CD8-positive, alpha-beta T cell (primary cell): ENCODE measurements at regions of chr17 and their contacts with region 1.

Region 1: DNA sequence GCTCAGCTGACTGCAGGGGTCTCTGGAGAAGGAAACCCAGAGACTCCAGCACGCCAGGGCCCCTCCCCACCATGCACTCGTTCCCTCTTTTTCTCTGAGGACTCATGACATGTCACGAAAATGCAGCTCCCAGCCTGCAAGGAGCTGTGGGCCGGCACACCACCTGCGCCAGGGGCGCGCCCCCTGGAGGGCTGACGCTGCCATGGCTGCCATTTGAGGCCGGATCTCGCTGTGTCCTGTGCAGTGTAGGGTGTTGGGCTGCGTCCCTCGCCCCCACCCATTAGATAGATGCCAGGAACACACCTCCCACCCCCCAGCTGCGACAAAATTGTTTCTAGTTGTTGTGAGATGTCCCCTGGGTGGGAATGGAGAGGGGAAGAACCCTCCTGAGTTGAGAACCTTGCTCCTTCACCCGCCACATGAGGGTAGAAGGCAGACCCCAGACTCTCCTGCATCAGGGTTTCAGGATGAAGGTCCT is 8.2 kb downstream of the SYNGR2 start:
- DNase-seq: peak; percentile 65 to 89 (median 77)
- ATAC-seq: peak; percentile 90
- H3K4me3 ChIP-seq: no peak overlapping the region
- H3K4me3 Mint-ChIP-seq: no peak overlapping the region
- H3K27ac ChIP-seq: no peak overlapping the region
- H3K27ac Mint-ChIP-seq: no peak overlapping the region
- H3K4me1 ChIP-seq: peaks cover 39% of the 10 kb centered on the region
- H3K4me1 Mint-ChIP-seq: peaks cover 41% of the 10 kb centered on the region
- H3K27me3 ChIP-seq: no peaks in the 10 kb centered on the region
- H3K27me3 Mint-ChIP-seq: no peaks in the 10 kb centered on the region
- CTCF ChIP-seq: peak; percentile 88

Region 2: GRCh38 chr17:77957857-77958715 is 218.5 kb before region 1 on chr17 and contains the start of gene TNRC6C:
- CTCF ChIA-PET with region 1: no interaction called
- POLR2A ChIA-PET with region 1: no interaction called
- intact Hi-C with region 1: no loop called
- DNase-seq: peak; percentile 99 to 100 (median 100)
- ATAC-seq: peak; percentile 86
- H3K4me3 ChIP-seq: peak within 1 kb of the TSS; percentile 74 to 81
- H3K4me3 Mint-ChIP-seq: peak within 1 kb of the TSS; percentile 97
- H3K27ac ChIP-seq: peak within 1 kb of the TSS; percentile 57 to 79
- H3K27ac Mint-ChIP-seq: peak within 1 kb of the TSS; percentile 97
- H3K4me1 ChIP-seq: peaks cover 37% of the 10 kb centered on the region
- H3K4me1 Mint-ChIP-seq: peaks cover 38% of the 10 kb centered on the region
- H3K27me3 ChIP-seq: no peaks in the 10 kb centered on the region
- H3K27me3 Mint-ChIP-seq: no peaks in the 10 kb centered on the region
- CTCF ChIP-seq: no peak
- total RNA-seq, gene TNRC6C: 49.3 to 53.8 TPM

Region 3: DNA sequence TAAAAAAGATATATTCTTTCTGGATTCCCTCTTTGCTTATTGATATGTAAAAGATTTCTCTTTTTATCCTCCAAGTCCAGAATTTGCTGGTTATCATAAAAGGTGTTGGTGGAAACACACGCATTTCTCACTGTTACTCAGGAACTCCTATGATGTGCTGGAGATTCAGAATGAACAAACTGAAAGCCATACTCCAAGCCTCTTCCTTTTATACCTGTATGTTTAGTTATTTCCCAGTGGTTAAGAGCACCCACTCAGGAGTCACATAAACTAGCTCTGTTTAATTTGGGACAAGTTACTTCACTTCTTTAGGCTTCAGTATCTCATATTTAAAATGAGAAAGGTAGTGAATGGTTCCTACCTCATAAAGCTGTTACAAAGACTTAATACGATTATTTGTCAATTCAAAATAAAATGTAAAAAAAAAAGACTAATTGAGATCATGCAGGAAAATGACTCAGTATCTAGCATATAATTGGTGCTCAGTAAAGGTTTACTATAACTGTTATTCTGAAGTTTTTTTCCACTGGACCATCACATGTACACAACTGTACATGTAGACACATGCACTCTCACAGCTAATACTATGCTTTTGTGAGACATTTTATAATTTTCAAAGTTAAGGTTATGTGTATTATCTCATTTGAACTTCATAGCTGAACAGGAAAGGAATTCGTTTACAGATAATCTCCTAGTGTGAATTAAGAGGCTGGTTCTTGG is 171.0 kb before region 1 on chr17:
- CTCF ChIA-PET with region 1: no interaction called
- POLR2A ChIA-PET with region 1: no interaction called
- intact Hi-C with region 1: no loop called
- DNase-seq: no peak
- ATAC-seq: no peak
- H3K4me3 ChIP-seq: no peak overlapping the region
- H3K4me3 Mint-ChIP-seq: no peak overlapping the region
- H3K27ac ChIP-seq: no peak overlapping the region
- H3K27ac Mint-ChIP-seq: peak overlapping the region; percentile 66
- H3K4me1 ChIP-seq: peaks cover 24% of the 10 kb centered on the region
- H3K4me1 Mint-ChIP-seq: peaks cover 34% of the 10 kb centered on the region
- H3K27me3 ChIP-seq: no peaks in the 10 kb centered on the region
- H3K27me3 Mint-ChIP-seq: no peaks in the 10 kb centered on the region
- CTCF ChIP-seq: no peak

Region 4: GRCh38 chr17:78082988-78083387 is 93.6 kb before region 1 on chr17:
- CTCF ChIA-PET with region 1: interaction called, 18 read pairs
- POLR2A ChIA-PET with region 1: no interaction called
- intact Hi-C with region 1: loop called (anchors 1 kb)
- DNase-seq: no peak
- ATAC-seq: no peak
- H3K4me3 ChIP-seq: no peak overlapping the region
- H3K4me3 Mint-ChIP-seq: no peak overlapping the region
- H3K27ac ChIP-seq: no peak overlapping the region
- H3K27ac Mint-ChIP-seq: peak overlapping the region; percentile 18
- H3K4me1 ChIP-seq: no peaks in the 10 kb centered on the region
- H3K4me1 Mint-ChIP-seq: peaks cover 3% of the 10 kb centered on the region
- H3K27me3 ChIP-seq: no peaks in the 10 kb centered on the region
- H3K27me3 Mint-ChIP-seq: no peaks in the 10 kb centered on the region
- CTCF ChIP-seq: no peak

Region 5: DNA sequence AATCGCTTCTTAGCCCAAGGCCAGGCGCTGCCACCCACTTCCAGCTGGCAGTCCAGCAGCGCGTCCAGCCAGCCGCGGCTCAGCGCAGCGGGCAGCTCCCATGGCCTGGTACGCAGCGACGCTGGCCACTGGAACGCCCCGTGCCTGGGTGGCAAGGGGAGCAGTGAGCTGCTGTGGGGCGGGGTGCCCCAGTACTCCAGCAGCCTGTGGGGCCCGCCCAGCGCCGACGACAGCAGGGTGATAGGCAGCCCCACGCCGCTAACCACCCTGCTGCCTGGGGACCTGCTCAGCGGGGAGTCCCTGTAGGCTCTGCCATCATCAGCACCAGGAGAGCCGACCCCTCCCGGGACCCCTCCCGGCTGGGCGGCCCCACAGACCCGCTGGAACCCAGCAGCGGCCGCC is 72.0 kb before region 1 on chr17:
- CTCF ChIA-PET with region 1: interaction called, 85 read pairs
- POLR2A ChIA-PET with region 1: interaction called, 5 read pairs
- intact Hi-C with region 1: no loop called
- DNase-seq: no peak
- ATAC-seq: no peak
- H3K4me3 ChIP-seq: no peak overlapping the region
- H3K4me3 Mint-ChIP-seq: no peak overlapping the region
- H3K27ac ChIP-seq: no peak overlapping the region
- H3K27ac Mint-ChIP-seq: no peak overlapping the region
- H3K4me1 ChIP-seq: no peaks in the 10 kb centered on the region
- H3K4me1 Mint-ChIP-seq: peaks cover 10% of the 10 kb centered on the region
- H3K27me3 ChIP-seq: no peaks in the 10 kb centered on the region
- H3K27me3 Mint-ChIP-seq: no peaks in the 10 kb centered on the region
- CTCF ChIP-seq: no peak

Region 6: DNA sequence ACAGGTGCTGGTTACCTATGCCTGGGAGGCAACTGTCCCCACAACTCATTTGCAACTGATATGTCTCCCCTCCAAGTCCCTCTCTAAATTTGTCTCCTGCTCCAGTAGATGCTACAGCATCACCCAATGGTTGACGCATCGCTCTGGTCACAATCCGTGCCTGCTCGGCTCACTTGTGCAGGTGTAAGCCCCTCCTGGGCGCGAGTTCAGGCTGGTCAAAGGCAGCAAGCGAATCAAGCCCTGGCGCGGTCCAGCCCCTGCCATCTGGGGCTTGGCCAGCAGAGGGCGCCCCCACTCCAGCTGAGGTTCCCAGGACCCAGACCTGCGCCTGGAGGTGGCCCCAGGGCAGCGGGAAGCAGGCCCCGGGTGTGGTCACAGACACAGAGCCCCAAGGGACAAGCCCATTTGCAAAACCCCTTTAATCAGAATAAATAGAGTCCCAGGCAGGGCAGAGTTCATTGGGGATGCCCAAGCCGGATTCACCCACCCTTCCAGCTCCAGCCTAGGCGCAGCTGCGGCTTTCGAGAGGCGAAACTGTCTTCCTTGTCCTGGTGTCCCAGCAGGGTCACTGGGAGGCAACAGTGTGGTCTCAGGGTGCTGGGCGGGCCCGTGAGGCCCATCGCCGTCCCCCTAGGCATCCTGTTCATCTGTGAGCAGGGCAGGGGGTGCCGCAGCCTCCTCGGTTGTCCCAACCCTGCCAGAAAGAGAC is 63.9 kb before region 1 on chr17:
- CTCF ChIA-PET with region 1: interaction called, 85 read pairs
- POLR2A ChIA-PET with region 1: interaction called, 5 read pairs
- intact Hi-C with region 1: loop called (anchors 1 kb)
- DNase-seq: peak; percentile 62 to 91 (median 78)
- ATAC-seq: peak; percentile 67
- H3K4me3 ChIP-seq: no peak overlapping the region
- H3K4me3 Mint-ChIP-seq: peak overlapping the region; percentile 42
- H3K27ac ChIP-seq: peak overlapping the region in 1 of 2 experiments; percentile 74
- H3K27ac Mint-ChIP-seq: peak overlapping the region; percentile 90
- H3K4me1 ChIP-seq: peaks cover 45% of the 10 kb centered on the region
- H3K4me1 Mint-ChIP-seq: peaks cover 42% of the 10 kb centered on the region
- H3K27me3 ChIP-seq: no peaks in the 10 kb centered on the region
- H3K27me3 Mint-ChIP-seq: no peaks in the 10 kb centered on the region
- CTCF ChIP-seq: peak; percentile 99

Region 7: GRCh38 chr17:78120971-78121800 is 55.4 kb before region 1 on chr17:
- CTCF ChIA-PET with region 1: interaction called, 12 read pairs
- POLR2A ChIA-PET with region 1: interaction called, 5 read pairs
- intact Hi-C with region 1: no loop called
- DNase-seq: peak in 6 of 9 experiments; percentile 61 to 84 (median 75)
- ATAC-seq: peak; percentile 51
- H3K4me3 ChIP-seq: peak overlapping the region; percentile 36 to 51
- H3K4me3 Mint-ChIP-seq: peak overlapping the region; percentile 83
- H3K27ac ChIP-seq: peak overlapping the region; percentile 47 to 75
- H3K27ac Mint-ChIP-seq: peak overlapping the region; percentile 93
- H3K4me1 ChIP-seq: peaks cover 91% of the 10 kb centered on the region
- H3K4me1 Mint-ChIP-seq: peaks cover 70% of the 10 kb centered on the region
- H3K27me3 ChIP-seq: no peaks in the 10 kb centered on the region
- H3K27me3 Mint-ChIP-seq: no peaks in the 10 kb centered on the region
- CTCF ChIP-seq: no peak

Region 8: DNA sequence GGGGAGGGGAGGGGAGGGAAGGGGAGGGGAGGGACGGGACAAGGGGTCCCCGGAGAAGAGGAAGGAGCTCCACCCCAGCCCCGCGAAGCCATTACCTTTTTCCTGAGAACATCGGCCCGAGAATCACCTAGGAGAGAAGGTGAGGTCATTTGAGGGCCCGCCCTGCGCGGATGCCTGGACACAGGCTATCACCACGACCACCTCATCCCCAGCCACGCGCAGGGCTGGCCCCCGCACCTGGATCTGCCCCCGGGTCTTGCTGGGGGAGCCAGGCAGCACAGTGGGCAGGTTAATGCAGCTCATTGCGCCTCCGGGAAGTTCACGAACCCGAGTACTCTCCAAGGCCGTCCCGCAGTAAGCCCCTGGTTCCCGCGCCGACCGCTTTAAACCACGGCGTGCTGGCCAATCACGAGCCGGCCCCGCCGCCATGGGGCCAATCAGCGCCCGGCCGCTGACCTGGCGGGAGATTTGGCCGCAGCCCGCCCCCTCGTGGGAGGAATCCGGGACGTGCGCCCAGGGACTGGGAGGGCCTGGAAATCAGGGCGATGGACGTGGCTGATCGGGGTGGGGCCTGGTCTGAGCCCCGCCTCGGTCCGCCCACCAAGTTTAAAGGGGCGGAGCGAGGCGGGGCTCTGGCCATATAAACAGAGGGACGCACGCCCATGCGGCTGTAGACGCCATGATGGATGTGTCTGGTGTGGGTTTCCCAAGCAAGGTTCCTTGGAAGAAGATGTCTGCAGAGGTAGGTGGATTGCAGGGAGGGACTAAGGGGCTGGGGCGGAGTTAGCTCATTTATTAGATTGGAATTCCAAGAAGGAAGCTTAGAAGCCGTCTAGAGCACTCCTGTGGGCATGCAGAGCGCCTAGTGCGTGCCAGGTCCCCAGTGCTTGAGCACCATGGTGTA is 10.4 kb after region 1 on chr17 and contains the starts of genes AFMID and TK1:
- CTCF ChIA-PET with region 1: interaction called, 24 read pairs
- POLR2A ChIA-PET with region 1: no interaction called
- intact Hi-C with region 1: no loop called
- DNase-seq: peak; percentile 57 to 85 (median 72)
- ATAC-seq: peak; percentile 91
- H3K4me3 ChIP-seq: peak within 1 kb of the TSS; percentile 48 to 73
- H3K4me3 Mint-ChIP-seq: peak within 1 kb of the TSS; percentile 85
- H3K27ac ChIP-seq: no peak within 1 kb of the TSS
- H3K27ac Mint-ChIP-seq: no peak within 1 kb of the TSS
- H3K4me1 ChIP-seq: peaks cover 6% of the 10 kb centered on the region
- H3K4me1 Mint-ChIP-seq: peaks cover 9% of the 10 kb centered on the region
- H3K27me3 ChIP-seq: no peaks in the 10 kb centered on the region
- H3K27me3 Mint-ChIP-seq: no peaks in the 10 kb centered on the region
- CTCF ChIP-seq: no peak
- total RNA-seq, gene AFMID: 0.65 to 0.92 TPM
- total RNA-seq, gene TK1: 0.76 to 1.1 TPM

Region 9: DNA sequence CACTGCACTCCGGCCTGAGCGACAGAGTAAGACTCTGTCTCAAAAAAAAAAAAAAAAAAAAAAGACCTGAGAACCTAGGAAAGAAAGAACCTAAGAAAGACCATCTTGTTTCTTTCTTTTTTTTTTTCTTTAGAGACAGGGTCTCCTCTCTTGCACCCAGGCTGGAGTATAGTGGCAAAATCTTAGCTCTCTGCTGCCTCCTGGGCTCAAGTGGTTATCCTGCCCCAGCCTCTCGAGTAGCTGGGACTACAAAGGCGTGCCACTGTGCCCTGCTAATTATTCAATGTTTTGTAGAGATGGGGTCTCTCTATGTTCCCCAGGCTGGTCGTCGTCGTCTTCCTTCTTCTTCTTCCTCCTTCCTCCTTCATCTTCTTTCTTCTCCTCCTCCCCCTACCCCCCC is 29.7 kb after region 1 on chr17:
- CTCF ChIA-PET with region 1: no interaction called
- POLR2A ChIA-PET with region 1: no interaction called
- intact Hi-C with region 1: no loop called
- DNase-seq: no peak
- ATAC-seq: peak; percentile 38
- H3K4me3 ChIP-seq: no peak overlapping the region
- H3K4me3 Mint-ChIP-seq: no peak overlapping the region
- H3K27ac ChIP-seq: no peak overlapping the region
- H3K27ac Mint-ChIP-seq: no peak overlapping the region
- H3K4me1 ChIP-seq: no peaks in the 10 kb centered on the region
- H3K4me1 Mint-ChIP-seq: no peaks in the 10 kb centered on the region
- H3K27me3 ChIP-seq: no peaks in the 10 kb centered on the region
- H3K27me3 Mint-ChIP-seq: no peaks in the 10 kb centered on the region
- CTCF ChIP-seq: no peak

Region 10: GRCh38 chr17:78226749-78227399 is 50.3 kb after region 1 on chr17:
- CTCF ChIA-PET with region 1: interaction called, 11 read pairs
- POLR2A ChIA-PET with region 1: no interaction called
- intact Hi-C with region 1: no loop called
- DNase-seq: no peak
- ATAC-seq: no peak
- H3K4me3 ChIP-seq: no peak overlapping the region
- H3K4me3 Mint-ChIP-seq: no peak overlapping the region
- H3K27ac ChIP-seq: no peak overlapping the region
- H3K27ac Mint-ChIP-seq: no peak overlapping the region
- H3K4me1 ChIP-seq: no peaks in the 10 kb centered on the region
- H3K4me1 Mint-ChIP-seq: peaks cover 7% of the 10 kb centered on the region
- H3K27me3 ChIP-seq: peaks cover 11 to 13% of the 10 kb centered on the region in 2 experiments
- H3K27me3 Mint-ChIP-seq: peaks cover 23% of the 10 kb centered on the region
- CTCF ChIP-seq: no peak

Region 11: DNA sequence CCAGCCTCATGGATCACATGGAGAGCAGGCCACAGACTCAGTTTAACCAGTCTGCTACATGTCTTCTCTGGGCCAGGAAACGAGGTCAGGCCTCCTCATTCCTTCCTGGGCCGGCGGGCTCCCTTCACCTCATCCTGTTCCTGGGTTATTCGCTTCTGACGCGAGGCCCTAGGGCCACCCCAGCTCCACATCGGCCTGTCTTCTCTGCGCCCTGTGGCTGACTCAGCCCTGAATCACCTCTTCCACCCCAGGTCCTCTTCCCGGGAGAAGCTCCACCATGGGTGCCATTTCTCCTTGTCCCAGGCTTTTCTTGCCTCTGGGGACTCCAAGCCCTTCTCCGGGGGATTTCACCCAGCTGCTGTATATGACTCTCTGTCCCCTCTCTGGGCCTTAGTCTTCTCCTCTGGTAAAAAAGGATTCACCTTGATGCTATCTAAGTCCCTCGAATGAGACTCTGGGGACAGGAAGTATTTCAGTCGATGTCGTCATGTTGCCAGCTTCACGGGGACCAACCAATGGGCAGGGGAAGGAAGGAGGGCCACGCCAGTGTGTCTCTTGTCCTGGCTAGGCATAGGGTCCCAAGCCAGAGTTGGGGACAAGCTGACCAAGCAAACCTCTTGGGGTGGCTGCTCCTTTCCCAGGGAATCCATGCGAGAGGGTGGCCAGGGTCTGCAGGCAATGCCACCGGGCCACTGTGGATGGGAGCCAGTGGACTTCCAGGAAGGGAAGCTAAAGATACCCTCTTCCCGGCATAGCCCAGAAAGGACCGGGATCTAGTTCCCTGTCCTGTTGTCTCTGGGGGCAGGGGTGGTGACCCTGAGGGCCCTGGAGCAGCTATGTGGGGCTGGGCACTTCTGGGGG is 124.6 kb after region 1 on chr17:
- CTCF ChIA-PET with region 1: no interaction called
- POLR2A ChIA-PET with region 1: no interaction called
- intact Hi-C with region 1: no loop called
- DNase-seq: no peak
- ATAC-seq: no peak
- H3K4me3 ChIP-seq: no peak overlapping the region
- H3K4me3 Mint-ChIP-seq: no peak overlapping the region
- H3K27ac ChIP-seq: no peak overlapping the region
- H3K27ac Mint-ChIP-seq: no peak overlapping the region
- H3K4me1 ChIP-seq: no peaks in the 10 kb centered on the region
- H3K4me1 Mint-ChIP-seq: peaks cover 2% of the 10 kb centered on the region
- H3K27me3 ChIP-seq: no peaks in the 10 kb centered on the region
- H3K27me3 Mint-ChIP-seq: no peaks in the 10 kb centered on the region
- CTCF ChIP-seq: no peak